Activated CD8-positive, alpha-beta T cell treated with anti-CD3 and anti-CD28 coated beads, Interleukin-2, amount 10 ng/mL, durations not matched to agents 7 days and 5 days (primary cell): ENCODE measurements at regions of chr17 and their contacts with region 1.

Region 1: GRCh38 chr17:75855310-75856081 is at the start of gene WBP2:
- DNase-seq: peak; percentile 99
- ATAC-seq: peak; percentile 93
- H3K4me3 Mint-ChIP-seq: no peak within 1 kb of the TSS
- H3K27ac Mint-ChIP-seq: peak within 1 kb of the TSS; percentile 93
- H3K4me1 Mint-ChIP-seq: peaks cover 37% of the 10 kb centered on the region
- H3K27me3 Mint-ChIP-seq: no peaks in the 10 kb centered on the region
- total RNA-seq, gene WBP2: 64.3 to 68.6 TPM

Region 2: GRCh38 chr17:75784473-75785015 is 71.0 kb before region 1 on chr17 and contains the start of gene UNK:
- CTCF ChIA-PET with region 1: interaction called, 13 read pairs
- POLR2A ChIA-PET with region 1: interaction called, 9 read pairs
- DNase-seq: peak; percentile 98
- ATAC-seq: peak; percentile 72
- H3K4me3 Mint-ChIP-seq: peak within 1 kb of the TSS; percentile 91
- H3K27ac Mint-ChIP-seq: peak within 1 kb of the TSS; percentile 100
- H3K4me1 Mint-ChIP-seq: peaks cover 50% of the 10 kb centered on the region
- H3K27me3 Mint-ChIP-seq: peaks cover 3% of the 10 kb centered on the region
- total RNA-seq, gene UNK: 30.2 to 31.0 TPM

Region 3: DNA sequence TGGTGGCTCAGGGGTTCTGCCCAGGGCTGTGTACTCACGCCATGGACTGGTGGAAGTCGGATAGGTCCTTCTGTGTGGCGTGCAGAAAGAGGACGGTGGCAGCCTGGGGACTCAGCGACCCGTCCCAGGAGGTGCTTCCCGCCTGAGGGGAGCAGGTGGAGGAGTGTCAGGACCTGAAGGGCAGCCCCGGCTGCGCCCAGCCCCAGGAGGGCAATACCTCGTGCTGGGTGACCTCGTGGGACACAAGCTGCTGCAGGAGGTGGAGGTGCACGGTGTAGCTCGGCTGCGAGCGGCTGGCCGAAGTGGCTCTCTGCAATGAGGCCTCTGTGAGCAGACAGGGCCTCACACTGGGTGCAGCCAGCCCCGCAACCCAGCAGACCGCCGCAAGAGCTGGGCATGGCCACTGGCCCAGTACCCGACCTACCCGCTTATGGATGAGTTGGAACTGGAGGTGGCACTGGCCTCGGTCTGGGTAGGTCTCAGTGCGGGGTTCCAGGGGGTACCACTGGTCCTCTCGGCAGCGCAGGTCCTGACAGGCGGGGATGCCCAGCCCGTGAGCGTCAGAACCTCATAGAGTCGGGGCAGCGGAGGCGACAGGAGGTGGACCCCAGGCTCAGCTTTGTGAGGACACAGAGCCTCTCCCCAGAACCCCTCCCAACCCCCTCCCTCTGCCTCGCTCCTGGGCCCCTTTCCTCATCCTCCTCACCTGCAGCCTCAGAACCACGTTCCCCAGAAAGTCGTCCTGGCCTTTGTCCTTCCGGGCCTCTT is 15.5 kb before region 1 on chr17:
- CTCF ChIA-PET with region 1: interaction called, 49 read pairs
- POLR2A ChIA-PET with region 1: interaction called, 66 read pairs
- DNase-seq: no peak
- ATAC-seq: no peak
- H3K4me3 Mint-ChIP-seq: no peak overlapping the region
- H3K27ac Mint-ChIP-seq: no peak overlapping the region
- H3K4me1 Mint-ChIP-seq: peaks cover 27% of the 10 kb centered on the region
- H3K27me3 Mint-ChIP-seq: no peaks in the 10 kb centered on the region

Region 4: GRCh38 chr17:75845049-75845860 is 10.2 kb before region 1 on chr17:
- CTCF ChIA-PET with region 1: interaction called, 49 read pairs
- POLR2A ChIA-PET with region 1: interaction called, 66 read pairs
- DNase-seq: peak; percentile 74
- ATAC-seq: peak; percentile 49
- H3K4me3 Mint-ChIP-seq: peak overlapping the region; percentile 57
- H3K27ac Mint-ChIP-seq: peak overlapping the region; percentile 77
- H3K4me1 Mint-ChIP-seq: peaks cover 36% of the 10 kb centered on the region
- H3K27me3 Mint-ChIP-seq: no peaks in the 10 kb centered on the region

Region 5: DNA sequence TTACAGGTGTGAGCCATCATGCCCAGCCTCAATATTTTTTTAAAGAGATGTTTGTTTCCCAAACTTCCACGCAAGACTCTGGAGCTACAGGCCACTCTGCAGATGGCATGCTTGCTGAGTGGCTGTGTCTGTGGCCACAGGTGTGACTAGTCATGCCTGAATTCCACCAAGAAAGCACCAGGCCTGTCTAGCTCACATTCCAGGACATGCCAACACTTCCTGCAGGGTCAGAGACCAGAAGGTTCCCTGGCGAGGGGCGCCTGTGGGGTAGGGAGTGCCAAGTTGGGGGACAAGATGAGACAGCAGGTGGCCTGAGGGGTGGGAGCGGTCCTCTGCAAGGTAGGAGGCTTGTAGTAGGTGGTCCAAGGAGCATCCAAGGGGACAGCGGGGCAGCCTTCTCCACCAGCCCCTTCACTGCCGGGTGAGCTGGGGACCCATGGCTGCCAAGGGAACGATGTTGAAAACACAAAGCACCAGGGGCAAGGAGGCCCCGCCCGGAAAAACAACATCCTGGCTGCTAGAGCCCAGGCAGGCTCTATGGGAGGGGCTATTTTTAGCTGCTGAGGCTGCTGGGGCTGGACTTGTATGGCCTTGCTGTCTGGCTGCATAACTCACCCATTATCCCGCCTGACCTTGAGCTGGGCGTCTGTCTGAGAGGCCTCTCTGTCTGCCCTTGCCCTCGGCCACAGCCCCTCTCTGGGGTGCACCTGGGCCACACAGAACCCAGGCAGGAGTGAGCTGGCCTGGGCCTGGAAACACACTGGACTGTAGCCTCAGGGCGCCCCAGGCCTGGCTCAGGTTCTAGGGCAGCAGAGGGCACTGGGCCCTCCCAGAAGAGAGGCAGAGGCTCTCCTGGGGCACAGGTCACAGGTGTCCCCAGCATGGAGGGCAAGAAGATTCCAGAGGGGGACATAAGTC is 17.2 kb after region 1 on chr17:
- CTCF ChIA-PET with region 1: interaction called, 307 read pairs
- POLR2A ChIA-PET with region 1: interaction called, 26 read pairs
- DNase-seq: peak; percentile 87
- ATAC-seq: peak; percentile 65
- H3K4me3 Mint-ChIP-seq: peak overlapping the region; percentile 42
- H3K27ac Mint-ChIP-seq: peak overlapping the region; percentile 95
- H3K4me1 Mint-ChIP-seq: peaks cover 40% of the 10 kb centered on the region
- H3K27me3 Mint-ChIP-seq: peaks cover 3% of the 10 kb centered on the region

Region 6: GRCh38 chr17:75877752-75878173 is 22.3 kb after region 1 on chr17:
- CTCF ChIA-PET with region 1: interaction called, 307 read pairs
- POLR2A ChIA-PET with region 1: interaction called, 26 read pairs
- DNase-seq: peak; percentile 82
- ATAC-seq: peak; percentile 77
- H3K4me3 Mint-ChIP-seq: peak overlapping the region; percentile 91
- H3K27ac Mint-ChIP-seq: peak overlapping the region; percentile 92
- H3K4me1 Mint-ChIP-seq: peaks cover 54% of the 10 kb centered on the region
- H3K27me3 Mint-ChIP-seq: peaks cover 8% of the 10 kb centered on the region

Region 7: DNA sequence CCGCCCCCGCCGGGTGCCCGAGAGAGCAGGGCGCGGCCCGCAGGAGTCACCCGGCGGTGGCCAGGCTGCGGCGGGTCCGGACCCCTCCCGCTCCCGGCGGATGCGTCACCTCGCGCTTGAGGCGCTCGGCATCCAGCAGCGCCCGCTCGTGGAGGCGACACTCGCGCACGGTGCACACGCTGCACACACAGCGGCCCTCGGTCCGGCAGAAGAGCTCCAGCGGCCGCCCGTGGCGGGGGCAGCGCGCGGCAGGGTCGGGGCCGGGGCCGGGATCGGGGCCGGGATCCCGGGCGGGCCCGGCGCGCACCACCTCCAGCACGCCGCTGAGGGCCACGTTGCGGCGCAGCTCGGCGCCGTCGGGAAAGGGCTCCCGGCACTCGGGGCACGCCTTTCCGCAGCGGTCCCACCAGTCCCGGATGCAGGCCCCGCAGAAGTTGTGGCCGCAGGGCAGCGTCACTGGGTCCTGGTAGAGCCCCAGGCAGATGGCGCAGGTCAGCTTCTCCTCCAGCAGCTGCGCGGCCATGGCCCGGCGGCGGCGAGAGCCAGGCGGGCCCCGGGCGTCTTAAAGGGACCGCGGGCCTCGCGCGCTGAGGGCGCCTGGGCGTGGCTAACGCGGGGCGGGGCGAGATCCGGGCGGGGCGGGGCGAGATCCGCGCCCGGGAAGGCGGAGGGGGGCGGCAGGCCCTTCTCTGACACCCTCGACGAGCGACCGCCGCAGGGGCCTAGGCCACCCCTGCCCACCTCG is 41.1 kb after region 1 on chr17 and contains the start of gene TRIM65:
- CTCF ChIA-PET with region 1: interaction called, 13 read pairs
- POLR2A ChIA-PET with region 1: interaction called, 11 read pairs
- DNase-seq: peak; percentile 80
- ATAC-seq: peak; percentile 88
- H3K4me3 Mint-ChIP-seq: peak within 1 kb of the TSS; percentile 82
- H3K27ac Mint-ChIP-seq: peak within 1 kb of the TSS; percentile 82
- H3K4me1 Mint-ChIP-seq: peaks cover 28% of the 10 kb centered on the region
- H3K27me3 Mint-ChIP-seq: no peaks in the 10 kb centered on the region
- total RNA-seq, gene TRIM65: 35.8 to 37.3 TPM